Colonic mucosa (tissue), 4 donors: ENCODE measurements at regions of chr22 and their contacts with region 1.

Region 1: GRCh38 chr22:30444632-30445437 is 19.3 kb downstream of the MTFP1 start:
- DNase-seq: peak; percentile 49
- H3K4me3 ChIP-seq: no peak overlapping the region
- H3K27ac ChIP-seq: no peak overlapping the region
- H3K4me1 ChIP-seq: no peaks in the 10 kb centered on the region
- H3K27me3 ChIP-seq: no peaks in the 10 kb centered on the region
- CTCF ChIP-seq: peak; percentile 62

Region 2: DNA sequence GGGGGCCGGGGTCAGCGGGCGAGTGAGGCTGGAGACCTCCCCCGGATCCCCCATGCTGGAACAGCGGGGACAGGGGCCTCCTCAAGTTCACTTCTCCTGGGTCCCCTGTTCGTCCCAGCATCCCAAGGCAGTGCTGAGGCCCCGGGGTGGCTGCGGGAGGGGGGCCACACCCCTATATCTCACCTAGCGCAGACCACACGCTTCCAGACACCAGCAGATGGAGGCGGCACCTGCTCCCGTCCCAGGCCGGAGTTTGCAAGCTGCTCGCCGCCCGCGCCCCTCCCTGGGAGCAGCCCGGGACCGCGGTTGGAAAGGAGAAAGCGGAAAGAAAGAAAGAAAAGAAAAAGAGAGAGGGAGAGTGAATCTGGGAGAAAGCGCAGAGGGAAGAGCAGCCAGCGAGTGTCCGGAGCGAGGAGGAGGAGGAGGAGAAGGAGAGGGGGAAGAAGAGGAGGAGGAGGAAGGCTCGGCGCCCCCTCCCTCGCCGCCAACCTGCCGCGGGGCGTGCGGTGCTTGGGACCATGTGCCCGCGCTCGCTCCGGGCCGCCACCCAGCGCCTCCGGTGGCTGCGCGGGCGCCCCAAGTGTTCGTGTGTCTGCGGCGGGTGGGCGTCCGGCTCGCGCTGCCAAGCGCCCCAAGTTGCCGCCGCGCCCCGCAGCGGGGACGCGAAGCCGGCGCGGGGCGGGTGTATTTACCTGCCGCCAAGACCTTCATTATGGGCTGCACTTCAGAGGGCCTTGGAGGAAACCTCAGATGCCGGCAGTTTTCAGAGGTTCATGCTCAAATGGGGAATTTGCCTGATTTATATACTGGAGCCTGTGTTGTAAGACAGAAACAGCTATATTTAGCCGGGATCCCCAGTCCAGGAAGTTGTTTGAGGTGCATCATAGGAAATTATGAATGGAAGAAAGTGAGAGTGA is 198.6 kb before region 1 on chr22 and contains the start of gene LIF:
- intact Hi-C with region 1: no loop called
- DNase-seq: peak; percentile 42
- H3K4me3 ChIP-seq: peak within 1 kb of the TSS; percentile 61
- H3K27ac ChIP-seq: peak within 1 kb of the TSS; percentile 82
- H3K4me1 ChIP-seq: peaks cover 13% of the 10 kb centered on the region
- H3K27me3 ChIP-seq: peaks cover 6% of the 10 kb centered on the region
- CTCF ChIP-seq: no peak
- total RNA-seq, gene LIF: 9.5 to 12.5 TPM

Region 3: DNA sequence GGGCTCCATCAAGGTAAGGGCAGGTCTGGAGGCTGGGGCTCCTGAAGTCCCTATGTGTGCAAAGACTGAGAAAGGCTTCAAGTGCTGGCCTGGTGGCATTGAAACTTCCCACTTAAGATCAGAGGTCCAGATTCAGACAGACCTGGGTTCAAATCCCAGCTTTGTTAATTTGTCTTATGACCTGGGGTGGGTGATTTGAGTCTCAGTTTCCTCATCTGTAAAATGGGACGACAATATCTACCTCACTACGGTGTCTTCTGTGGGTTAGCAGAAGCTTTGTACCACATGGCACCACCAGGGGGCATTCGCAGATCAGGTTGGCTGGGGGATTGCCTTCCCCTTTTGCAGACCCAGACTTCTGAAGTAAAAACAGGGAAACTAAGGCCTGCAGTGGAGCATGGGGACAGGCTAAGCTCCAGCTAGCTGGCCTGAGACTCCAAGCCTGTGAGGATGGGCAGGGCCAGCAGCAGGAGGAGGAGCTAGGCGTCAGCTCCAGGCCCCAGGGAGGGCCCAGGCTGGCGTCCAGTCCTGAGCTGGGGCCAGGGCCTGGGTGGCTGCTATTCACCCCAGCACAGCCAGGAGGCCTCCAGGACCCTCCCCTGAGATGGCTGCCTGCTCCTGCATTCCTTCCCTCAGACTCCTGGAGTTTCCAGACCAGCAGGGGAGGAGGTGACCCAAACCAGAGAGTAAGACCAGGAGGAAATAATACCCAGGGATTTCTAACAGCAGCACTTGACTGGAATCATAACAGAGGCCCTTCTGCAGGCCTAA is 157.0 kb before region 1 on chr22:
- intact Hi-C with region 1: no loop called
- DNase-seq: peak; percentile 90
- H3K4me3 ChIP-seq: peak overlapping the region; percentile 91
- H3K27ac ChIP-seq: no peak overlapping the region
- H3K4me1 ChIP-seq: peaks cover 13% of the 10 kb centered on the region
- H3K27me3 ChIP-seq: no peaks in the 10 kb centered on the region
- CTCF ChIP-seq: peak; percentile 85

Region 4: DNA sequence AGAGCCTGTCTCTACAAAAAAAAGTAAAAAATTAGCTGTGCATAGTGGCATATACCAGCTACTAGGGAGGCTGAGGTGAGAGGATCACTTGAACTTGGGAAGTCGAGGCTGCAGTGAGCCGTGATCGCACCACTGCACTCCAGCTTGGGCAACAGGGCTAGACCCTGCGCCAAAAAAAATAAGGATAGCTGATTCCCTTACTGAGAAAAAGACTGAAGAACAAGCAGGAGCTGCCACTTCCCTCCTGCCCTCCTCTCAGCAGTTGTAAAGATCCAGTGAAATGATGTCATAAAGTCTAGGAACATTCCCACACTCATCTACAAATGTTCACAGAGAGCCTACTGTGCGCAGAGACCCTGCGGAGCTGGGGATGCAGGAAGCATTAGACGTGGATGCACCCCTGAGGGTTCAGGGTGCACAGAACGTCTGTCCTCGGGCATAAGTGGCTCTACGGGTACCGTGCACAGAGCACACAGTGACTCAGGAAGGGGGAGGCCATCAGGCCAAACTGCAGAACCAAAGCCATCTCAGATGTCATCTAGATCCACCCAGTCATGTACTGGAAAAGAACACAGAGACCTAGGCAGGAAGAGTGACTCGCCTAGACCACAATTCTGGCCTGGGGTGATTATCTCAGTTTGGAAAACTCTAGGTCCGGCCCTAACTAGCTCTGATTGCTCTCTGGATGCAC is 36.3 kb before region 1 on chr22:
- intact Hi-C with region 1: no loop called
- DNase-seq: no peak
- H3K4me3 ChIP-seq: no peak overlapping the region
- H3K27ac ChIP-seq: no peak overlapping the region
- H3K4me1 ChIP-seq: no peaks in the 10 kb centered on the region
- H3K27me3 ChIP-seq: no peaks in the 10 kb centered on the region
- CTCF ChIP-seq: no peak

Region 5: GRCh38 chr22:30606455-30607299 is 161.8 kb after region 1 on chr22 and contains the start of gene TCN2:
- intact Hi-C with region 1: loop called (anchors 10 kb)
- DNase-seq: peak; percentile 82
- H3K4me3 ChIP-seq: peak within 1 kb of the TSS; percentile 52
- H3K27ac ChIP-seq: peak within 1 kb of the TSS; percentile 79
- H3K4me1 ChIP-seq: peaks cover 26% of the 10 kb centered on the region
- H3K27me3 ChIP-seq: no peaks in the 10 kb centered on the region
- CTCF ChIP-seq: no peak
- total RNA-seq, gene TCN2: 9.3 to 27.0 TPM